Activated B cell treated with CpG ODN at 0.5 μM for 24 hours (primary cell): ENCODE measurements at regions of chr6 and their contacts with region 1.

Region 1: GRCh38 chr6:31665501-31666336 is at the start of gene CSNK2B:
- DNase-seq: peak; percentile 91
- ATAC-seq: peak; percentile 86
- H3K4me3 Mint-ChIP-seq: peak within 1 kb of the TSS; percentile 96
- H3K27ac Mint-ChIP-seq: peak within 1 kb of the TSS; percentile 95
- H3K4me1 Mint-ChIP-seq: peaks cover 61% of the 10 kb centered on the region
- H3K27me3 Mint-ChIP-seq: no peaks in the 10 kb centered on the region
- CTCF ChIP-seq: no peak
- total RNA-seq, gene CSNK2B: 190 and 191 TPM in 2 replicates

Region 2: GRCh38 chr6:31293343-31293742 is 372.4 kb before region 1 on chr6:
- CTCF ChIA-PET with region 1: no interaction called
- POLR2A ChIA-PET with region 1: no interaction called
- intact Hi-C with region 1: no loop called
- DNase-seq: no peak
- ATAC-seq: no peak
- H3K4me3 Mint-ChIP-seq: no peak overlapping the region
- H3K27ac Mint-ChIP-seq: no peak overlapping the region
- H3K4me1 Mint-ChIP-seq: no peaks in the 10 kb centered on the region
- H3K27me3 Mint-ChIP-seq: peaks cover 14% of the 10 kb centered on the region
- CTCF ChIP-seq: no peak

Region 3: DNA sequence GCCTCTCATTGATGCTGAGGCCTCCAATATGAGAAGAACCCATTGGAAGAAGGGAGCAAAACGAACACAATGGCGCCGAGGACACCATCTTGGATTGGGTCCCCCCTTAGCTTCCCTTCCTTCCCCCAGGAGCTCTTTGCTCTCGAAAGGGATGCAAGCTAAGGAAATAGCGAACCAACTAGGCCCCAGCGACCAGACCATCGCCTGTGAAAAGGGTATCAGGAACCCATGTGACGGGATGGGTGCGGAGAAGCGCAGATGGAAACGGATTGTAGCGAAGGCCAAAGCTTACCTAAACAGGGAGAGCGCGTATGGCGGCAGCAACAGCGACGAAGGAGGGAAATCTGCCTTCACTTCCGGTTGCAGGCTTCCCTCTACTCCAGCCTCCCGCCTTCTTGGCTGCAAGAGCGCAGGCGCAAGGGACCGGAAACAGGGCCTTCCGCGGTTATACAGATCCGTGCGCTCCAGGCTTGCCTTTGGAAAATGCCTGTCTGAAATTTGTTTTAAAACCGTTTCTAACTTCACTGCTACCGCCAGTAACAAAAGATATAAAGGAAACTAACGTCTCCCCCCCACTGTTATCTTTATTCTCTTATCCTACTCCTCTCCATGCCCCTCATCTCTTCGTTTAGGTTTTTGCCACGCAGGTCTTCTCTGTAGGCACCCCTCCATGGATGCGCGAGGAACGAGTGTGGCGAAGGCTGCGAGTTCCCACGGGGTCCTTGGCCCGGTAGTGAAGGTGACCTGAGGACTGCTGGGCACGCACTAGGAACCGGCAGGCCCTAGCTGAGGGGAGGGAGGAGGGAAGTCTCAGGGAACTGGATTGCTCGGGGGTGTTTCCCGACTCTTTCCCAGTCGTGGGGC is 123.8 kb before region 1 on chr6 and contains the start of gene DDX39B:
- CTCF ChIA-PET with region 1: no interaction called
- POLR2A ChIA-PET with region 1: interaction called, 15 read pairs
- intact Hi-C with region 1: loop called (anchors 1 kb)
- DNase-seq: peak; percentile 80
- ATAC-seq: peak; percentile 77
- H3K4me3 Mint-ChIP-seq: peak within 1 kb of the TSS; percentile 98
- H3K27ac Mint-ChIP-seq: peak within 1 kb of the TSS; percentile 97
- H3K4me1 Mint-ChIP-seq: peaks cover 58% of the 10 kb centered on the region
- H3K27me3 Mint-ChIP-seq: no peaks in the 10 kb centered on the region
- CTCF ChIP-seq: no peak
- total RNA-seq, gene DDX39B: 431 and 484 TPM in 2 replicates

Region 4: DNA sequence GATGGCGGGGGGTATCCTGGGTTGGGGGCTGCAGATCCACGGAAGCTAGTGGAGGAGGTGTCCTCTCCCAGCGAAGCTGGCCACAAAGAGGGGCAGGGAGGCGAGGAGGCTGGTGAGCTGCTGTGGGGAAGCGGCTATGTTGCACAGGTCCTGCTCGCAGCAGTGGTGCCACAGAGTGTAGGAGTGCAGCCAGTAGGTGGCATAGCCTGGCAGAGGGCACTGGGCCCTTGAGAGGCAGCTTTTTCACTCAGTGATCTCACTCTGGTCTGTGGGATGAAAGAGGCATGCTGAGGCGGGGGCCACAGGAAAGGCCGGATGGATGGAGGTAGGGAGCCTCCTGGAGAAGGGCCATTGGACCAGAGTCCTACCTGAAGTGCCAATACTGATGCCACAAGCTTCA is 46.6 kb after region 1 on chr6:
- CTCF ChIA-PET with region 1: no interaction called
- POLR2A ChIA-PET with region 1: no interaction called
- intact Hi-C with region 1: no loop called
- DNase-seq: no peak
- ATAC-seq: peak; percentile 90
- H3K4me3 Mint-ChIP-seq: no peak overlapping the region
- H3K27ac Mint-ChIP-seq: no peak overlapping the region
- H3K4me1 Mint-ChIP-seq: peaks cover 12% of the 10 kb centered on the region
- H3K27me3 Mint-ChIP-seq: no peaks in the 10 kb centered on the region
- CTCF ChIP-seq: no peak

Region 5: GRCh38 chr6:31739639-31740396 is 74.1 kb after region 1 on chr6 and contains the start of gene MSH5:
- CTCF ChIA-PET with region 1: no interaction called
- POLR2A ChIA-PET with region 1: interaction called, 8 read pairs
- intact Hi-C with region 1: loop called (anchors 1 kb)
- DNase-seq: peak; percentile 90
- ATAC-seq: peak; percentile 80
- H3K4me3 Mint-ChIP-seq: peak within 1 kb of the TSS; percentile 93
- H3K27ac Mint-ChIP-seq: peak within 1 kb of the TSS; percentile 94
- H3K4me1 Mint-ChIP-seq: peaks cover 51% of the 10 kb centered on the region
- H3K27me3 Mint-ChIP-seq: no peaks in the 10 kb centered on the region
- CTCF ChIP-seq: no peak
- total RNA-seq, gene MSH5: 35.4 and 47.3 TPM in 2 replicates

Region 6: DNA sequence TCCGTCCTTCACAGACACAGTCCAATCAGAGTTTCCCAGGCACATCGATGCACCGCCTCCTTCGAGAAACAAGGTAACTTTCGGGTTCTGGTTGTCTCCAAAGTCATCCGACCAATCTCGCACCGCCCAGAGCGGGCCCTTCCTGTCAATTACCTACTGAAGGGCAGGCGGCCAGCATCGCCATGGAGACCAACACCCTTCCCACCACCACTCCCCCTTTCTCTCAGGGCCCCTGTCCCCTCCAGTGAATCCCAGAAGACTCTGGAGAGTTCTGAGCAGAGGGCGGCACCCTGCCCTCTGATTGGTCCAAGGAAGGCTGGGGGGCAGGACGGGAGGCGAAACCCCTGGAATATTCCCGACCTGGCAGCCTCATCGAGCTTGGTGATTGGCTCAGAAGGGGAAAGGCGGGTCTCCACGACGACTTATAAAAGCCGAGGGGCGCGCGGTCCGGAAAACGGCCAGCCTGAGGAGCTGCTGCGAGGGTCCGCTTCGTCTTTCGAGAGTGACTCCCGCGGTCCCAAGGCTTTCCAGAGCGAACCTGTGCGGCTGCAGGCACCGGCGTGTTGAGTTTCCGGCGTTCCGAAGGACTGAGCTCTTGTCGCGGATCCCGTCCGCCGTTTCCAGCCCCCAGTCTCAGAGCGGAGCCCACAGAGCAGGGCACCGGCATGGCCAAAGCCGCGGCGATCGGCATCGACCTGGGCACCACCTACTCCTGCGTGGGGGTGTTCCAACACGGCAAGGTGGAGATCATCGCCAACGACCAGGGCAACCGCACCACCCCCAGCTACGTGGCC is 161.8 kb after region 1 on chr6 and contains the start of gene HSPA1B:
- CTCF ChIA-PET with region 1: interaction called, 3 read pairs
- POLR2A ChIA-PET with region 1: interaction called, 14 read pairs
- intact Hi-C with region 1: loop called (anchors 1 kb)
- DNase-seq: peak; percentile 70
- ATAC-seq: peak; percentile 76
- H3K4me3 Mint-ChIP-seq: peak within 1 kb of the TSS; percentile 91
- H3K27ac Mint-ChIP-seq: peak within 1 kb of the TSS; percentile 99
- H3K4me1 Mint-ChIP-seq: peaks cover 40% of the 10 kb centered on the region
- H3K27me3 Mint-ChIP-seq: no peaks in the 10 kb centered on the region
- CTCF ChIP-seq: no peak
- total RNA-seq, gene HSPA1B: 23.7 and 30.4 TPM in 2 replicates

Region 7: DNA sequence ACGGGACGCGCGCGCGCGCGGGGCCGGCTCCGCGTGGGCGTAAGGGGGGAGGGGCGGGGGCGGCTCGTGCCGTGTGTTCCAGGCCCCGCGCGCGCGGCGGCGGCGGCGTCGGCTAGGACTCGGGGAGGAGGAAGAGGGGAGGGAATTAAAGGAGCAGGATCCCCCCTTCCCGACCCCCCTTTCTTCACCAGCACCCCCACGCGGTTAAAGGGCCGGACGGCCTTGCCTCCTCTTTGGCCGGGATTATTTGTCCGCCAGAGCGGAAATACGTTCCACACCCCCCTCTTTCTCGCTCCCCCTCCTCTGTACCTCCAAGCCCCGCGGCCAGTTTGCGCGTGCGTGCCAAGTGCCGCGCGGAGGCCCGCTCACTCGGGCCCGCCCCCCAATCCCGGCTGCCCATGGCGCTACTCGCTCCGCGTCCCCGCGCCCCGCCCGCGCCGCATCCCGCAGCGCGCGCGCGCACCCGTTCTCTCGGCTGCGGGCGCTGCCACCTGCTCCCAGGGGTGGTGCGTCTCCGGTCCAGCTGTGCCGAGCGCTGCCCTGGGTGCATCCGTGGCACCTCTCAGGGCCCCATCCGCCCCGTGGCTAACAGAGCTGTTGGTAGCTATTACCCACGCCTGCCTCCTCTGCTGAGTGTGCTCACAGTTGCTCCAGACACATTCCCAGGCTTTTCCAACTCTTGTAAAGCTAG is 236.4 kb after region 1 on chr6 and contains the start of gene ZBTB12:
- CTCF ChIA-PET with region 1: no interaction called
- POLR2A ChIA-PET with region 1: interaction called, 3 read pairs
- intact Hi-C with region 1: loop called (anchors 5 kb)
- DNase-seq: peak; percentile 83
- ATAC-seq: peak; percentile 69
- H3K4me3 Mint-ChIP-seq: peak within 1 kb of the TSS; percentile 89
- H3K27ac Mint-ChIP-seq: peak within 1 kb of the TSS; percentile 86
- H3K4me1 Mint-ChIP-seq: peaks cover 27% of the 10 kb centered on the region
- H3K27me3 Mint-ChIP-seq: no peaks in the 10 kb centered on the region
- CTCF ChIP-seq: no peak
- total RNA-seq, gene ZBTB12: 4.8 and 5.5 TPM in 2 replicates